Caco-2 (cell line): ENCODE measurements at regions of chr7 and their contacts with region 1.

Region 1: GRCh38 chr7:131649003-131649541 is 92.6 kb upstream of the PODXL start:
- DNase-seq: peak; percentile 70 to 72
- H3K4me3 ChIP-seq: no peak overlapping the region
- H3K4me3 Mint-ChIP-seq: peak overlapping the region; percentile 43
- H3K27ac Mint-ChIP-seq: peak overlapping the region; percentile 85
- H3K4me1 ChIP-seq: peaks cover 67% of the 10 kb centered on the region
- H3K4me1 Mint-ChIP-seq: peaks cover 23% of the 10 kb centered on the region
- H3K27me3 ChIP-seq: no peaks in the 10 kb centered on the region
- H3K27me3 Mint-ChIP-seq: no peaks in the 10 kb centered on the region
- CTCF ChIP-seq: no peak

Region 2: GRCh38 chr7:131546583-131547111 is 102.4 kb before region 1 on chr7:
- CTCF ChIA-PET with region 1: interaction called, 18 read pairs
- POLR2A ChIA-PET with region 1: no interaction called
- intact Hi-C with region 1: loop called (anchors 1 kb)
- DNase-seq: peak in 1 of 2 experiments; percentile 69
- H3K4me3 ChIP-seq: no peak overlapping the region
- H3K4me3 Mint-ChIP-seq: no peak overlapping the region
- H3K27ac Mint-ChIP-seq: peak overlapping the region; percentile 1
- H3K4me1 ChIP-seq: peaks cover 21% of the 10 kb centered on the region
- H3K4me1 Mint-ChIP-seq: peaks cover 30% of the 10 kb centered on the region
- H3K27me3 ChIP-seq: no peaks in the 10 kb centered on the region
- H3K27me3 Mint-ChIP-seq: no peaks in the 10 kb centered on the region
- CTCF ChIP-seq: peak; percentile 77 to 80

Region 3: GRCh38 chr7:131604841-131605279 is 44.2 kb before region 1 on chr7:
- CTCF ChIA-PET with region 1: interaction called, 5 read pairs
- POLR2A ChIA-PET with region 1: interaction called, 4 read pairs
- intact Hi-C with region 1: loop called (anchors 1 kb)
- DNase-seq: no peak
- H3K4me3 ChIP-seq: no peak overlapping the region
- H3K4me3 Mint-ChIP-seq: no peak overlapping the region
- H3K27ac Mint-ChIP-seq: peak overlapping the region; percentile 81
- H3K4me1 ChIP-seq: peaks cover 97% of the 10 kb centered on the region
- H3K4me1 Mint-ChIP-seq: peaks cover 68% of the 10 kb centered on the region
- H3K27me3 ChIP-seq: no peaks in the 10 kb centered on the region
- H3K27me3 Mint-ChIP-seq: no peaks in the 10 kb centered on the region
- CTCF ChIP-seq: no peak

Region 4: DNA sequence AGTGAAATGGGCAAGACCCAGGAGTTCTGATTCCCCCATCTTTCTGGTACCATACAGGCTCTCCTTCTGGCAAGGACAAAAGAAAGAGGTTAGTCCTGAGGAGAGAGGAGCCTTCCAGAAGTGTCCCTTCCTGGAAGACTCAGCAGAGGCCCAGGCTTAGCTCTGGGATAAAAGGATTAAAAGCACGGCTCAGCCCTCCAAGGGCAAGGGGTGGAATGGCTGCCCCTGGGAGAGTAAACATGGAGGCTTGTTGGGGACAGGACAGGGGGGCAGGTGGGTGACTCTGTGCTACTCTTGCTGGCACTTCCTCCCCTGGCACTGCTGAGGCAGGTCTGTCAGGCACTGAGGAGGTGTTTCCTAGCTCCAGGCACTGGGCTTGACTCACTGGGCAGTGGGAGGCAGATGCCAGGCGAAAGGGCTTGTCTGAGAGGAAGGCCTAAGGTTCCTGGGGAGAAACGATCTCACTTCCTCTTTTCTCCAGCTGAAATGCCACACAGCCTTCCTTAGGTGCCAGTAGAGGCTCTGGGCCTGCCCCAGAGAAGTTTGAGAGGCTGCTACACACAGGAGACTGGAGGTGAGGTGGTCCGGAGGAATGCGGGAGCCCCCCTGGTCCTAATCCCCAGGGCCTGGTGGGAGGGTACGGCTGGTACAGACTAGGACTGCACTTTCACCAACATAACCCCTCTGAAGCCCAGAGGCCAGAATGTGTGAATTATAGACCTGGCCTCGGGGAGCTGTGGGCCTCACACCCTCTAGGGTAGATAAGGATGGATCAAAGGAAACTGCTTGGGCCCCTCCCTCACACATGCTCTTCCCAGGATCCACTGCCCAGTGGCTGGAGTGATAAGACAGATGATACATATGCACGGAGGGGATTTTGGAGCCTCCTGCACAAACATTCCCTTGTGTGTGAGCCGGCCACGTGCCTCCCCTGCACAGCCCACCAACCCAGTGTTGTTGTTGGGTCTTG is 29.5 kb before region 1 on chr7:
- CTCF ChIA-PET with region 1: interaction called, 13 read pairs
- POLR2A ChIA-PET with region 1: interaction called, 18 read pairs
- intact Hi-C with region 1: loop called (anchors 1 kb)
- DNase-seq: peak; percentile 90 to 96
- H3K4me3 ChIP-seq: no peak overlapping the region
- H3K4me3 Mint-ChIP-seq: peak overlapping the region; percentile 22
- H3K27ac Mint-ChIP-seq: peak overlapping the region; percentile 13
- H3K4me1 ChIP-seq: peaks cover 76% of the 10 kb centered on the region
- H3K4me1 Mint-ChIP-seq: peaks cover 50% of the 10 kb centered on the region
- H3K27me3 ChIP-seq: no peaks in the 10 kb centered on the region
- H3K27me3 Mint-ChIP-seq: no peaks in the 10 kb centered on the region
- CTCF ChIP-seq: no peak

Region 5: GRCh38 chr7:131625817-131626372 is 23.2 kb before region 1 on chr7:
- CTCF ChIA-PET with region 1: interaction called, 34 read pairs
- POLR2A ChIA-PET with region 1: interaction called, 18 read pairs
- intact Hi-C with region 1: loop called (anchors 1 kb)
- DNase-seq: peak; percentile 95 to 97
- H3K4me3 ChIP-seq: no peak overlapping the region
- H3K4me3 Mint-ChIP-seq: peak overlapping the region; percentile 20
- H3K27ac Mint-ChIP-seq: peak overlapping the region; percentile 86
- H3K4me1 ChIP-seq: peaks cover 91% of the 10 kb centered on the region
- H3K4me1 Mint-ChIP-seq: peaks cover 64% of the 10 kb centered on the region
- H3K27me3 ChIP-seq: no peaks in the 10 kb centered on the region
- H3K27me3 Mint-ChIP-seq: no peaks in the 10 kb centered on the region
- CTCF ChIP-seq: peak; percentile 18 to 35

Region 6: GRCh38 chr7:131638641-131639430 is 10.2 kb before region 1 on chr7:
- CTCF ChIA-PET with region 1: interaction called, 11 read pairs
- POLR2A ChIA-PET with region 1: interaction called, 16 read pairs
- intact Hi-C with region 1: loop called (anchors 1 kb)
- DNase-seq: peak; percentile 75 to 84
- H3K4me3 ChIP-seq: no peak overlapping the region
- H3K4me3 Mint-ChIP-seq: peak overlapping the region; percentile 17
- H3K27ac Mint-ChIP-seq: peak overlapping the region; percentile 73
- H3K4me1 ChIP-seq: peaks cover 72% of the 10 kb centered on the region
- H3K4me1 Mint-ChIP-seq: peaks cover 64% of the 10 kb centered on the region
- H3K27me3 ChIP-seq: no peaks in the 10 kb centered on the region
- H3K27me3 Mint-ChIP-seq: no peaks in the 10 kb centered on the region
- CTCF ChIP-seq: no peak